Activated T-helper 1 cell treated with anti-CD3 and anti-CD28 coated beads, Interleukin-12 subunit alpha, Interleukin-12 subunit beta, Interleukin-2, Interleukin-4 antibody, amounts not matched to agents 30 ng/mL and 10 ng/mL and 1 ng/mL, durations not matched to agents 14 hours and 24 hours and 36 hours (primary cell): ENCODE measurements at regions of chr16 and their contacts with region 1.

Region 1: DNA sequence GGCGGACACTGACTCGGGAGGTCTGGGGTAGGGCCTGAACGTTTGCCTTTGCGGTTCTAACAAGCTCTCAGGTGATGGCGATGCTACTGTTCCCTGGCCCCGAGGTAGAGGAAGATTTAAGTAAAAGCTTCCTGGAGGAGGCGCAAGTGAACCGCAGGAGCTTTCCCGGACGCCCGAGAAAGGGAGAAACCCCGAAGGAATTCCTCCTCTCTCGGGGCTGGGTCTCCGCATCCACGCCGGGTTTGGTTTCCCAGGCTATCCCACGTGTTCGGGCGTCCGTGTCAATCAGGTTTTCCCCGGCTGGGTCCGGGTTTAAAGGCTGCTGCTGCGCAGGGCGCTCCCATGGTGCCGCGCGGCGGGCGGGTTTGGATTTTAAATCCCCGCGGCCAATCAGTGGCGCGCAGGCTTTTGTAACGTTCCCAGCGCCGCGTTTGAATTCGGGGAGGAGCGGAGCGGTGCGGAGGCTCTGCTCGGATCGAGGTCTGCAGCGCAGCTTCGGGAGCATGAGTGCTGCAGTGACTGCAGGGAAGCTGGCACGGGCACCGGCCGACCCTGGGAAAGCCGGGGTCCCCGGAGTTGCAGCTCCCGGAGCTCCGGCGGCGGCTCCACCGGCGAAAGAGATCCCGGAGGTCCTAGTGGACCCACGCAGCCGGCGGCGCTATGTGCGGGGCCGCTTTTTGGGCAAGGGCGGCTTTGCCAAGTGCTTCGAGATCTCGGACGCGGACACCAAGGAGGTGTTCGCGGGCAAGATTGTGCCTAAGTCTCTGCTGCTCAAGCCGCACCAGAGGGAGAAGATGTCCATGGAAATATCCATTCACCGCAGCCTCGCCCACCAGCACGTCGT is at the start of gene PLK1:
- DNase-seq: peak; percentile 81
- H3K4me3 Mint-ChIP-seq: peak within 1 kb of the TSS; percentile 94
- H3K27ac Mint-ChIP-seq: peak within 1 kb of the TSS; percentile 84
- H3K4me1 Mint-ChIP-seq: peaks cover 34% of the 10 kb centered on the region
- H3K27me3 Mint-ChIP-seq: no peaks in the 10 kb centered on the region
- total RNA-seq, gene PLK1: 45.2 and 54.7 TPM in 2 replicates

Region 2: GRCh38 chr16:23527961-23528643 is 150.6 kb before region 1 on chr16:
- intact Hi-C with region 1: no loop called
- DNase-seq: no peak
- H3K4me3 Mint-ChIP-seq: no peak overlapping the region
- H3K27ac Mint-ChIP-seq: no peak overlapping the region
- H3K4me1 Mint-ChIP-seq: no peaks in the 10 kb centered on the region
- H3K27me3 Mint-ChIP-seq: no peaks in the 10 kb centered on the region

Region 3: GRCh38 chr16:23595951-23596720 is 82.5 kb before region 1 on chr16 and contains the start of gene NDUFAB1:
- intact Hi-C with region 1: loop called (anchors 1 kb)
- DNase-seq: peak; percentile 90
- H3K4me3 Mint-ChIP-seq: peak within 1 kb of the TSS; percentile 88
- H3K27ac Mint-ChIP-seq: peak within 1 kb of the TSS; percentile 80
- H3K4me1 Mint-ChIP-seq: peaks cover 30% of the 10 kb centered on the region
- H3K27me3 Mint-ChIP-seq: no peaks in the 10 kb centered on the region
- total RNA-seq, gene NDUFAB1: 146 and 148 TPM in 2 replicates

Region 4: DNA sequence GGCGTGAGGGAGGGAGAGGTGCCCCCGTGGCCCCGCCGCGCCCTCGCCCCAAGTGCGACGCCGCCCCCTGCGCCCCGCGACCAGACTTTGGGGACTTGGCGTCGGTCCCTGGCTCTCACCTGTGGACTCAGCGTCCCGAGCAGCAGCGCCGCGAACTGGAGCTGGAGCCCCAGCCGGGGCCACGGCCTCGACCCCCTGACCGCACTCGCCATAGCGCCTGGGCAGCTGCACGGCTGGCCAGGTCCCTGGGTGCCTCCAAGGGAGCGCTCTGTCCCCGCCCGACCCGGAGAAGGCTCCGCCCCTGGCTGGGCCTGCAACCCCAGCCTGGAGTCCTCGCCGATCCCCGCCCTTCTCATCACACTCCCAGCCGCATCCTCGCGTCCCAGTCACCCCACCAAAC is 34.3 kb after region 1 on chr16 and contains the start of gene ERN2:
- intact Hi-C with region 1: no loop called
- DNase-seq: no peak
- H3K4me3 Mint-ChIP-seq: no peak within 1 kb of the TSS
- H3K27ac Mint-ChIP-seq: no peak within 1 kb of the TSS
- H3K4me1 Mint-ChIP-seq: no peaks in the 10 kb centered on the region
- H3K27me3 Mint-ChIP-seq: peaks cover 37% of the 10 kb centered on the region
- total RNA-seq, gene ERN2: not detected in 2 replicates

Region 5: DNA sequence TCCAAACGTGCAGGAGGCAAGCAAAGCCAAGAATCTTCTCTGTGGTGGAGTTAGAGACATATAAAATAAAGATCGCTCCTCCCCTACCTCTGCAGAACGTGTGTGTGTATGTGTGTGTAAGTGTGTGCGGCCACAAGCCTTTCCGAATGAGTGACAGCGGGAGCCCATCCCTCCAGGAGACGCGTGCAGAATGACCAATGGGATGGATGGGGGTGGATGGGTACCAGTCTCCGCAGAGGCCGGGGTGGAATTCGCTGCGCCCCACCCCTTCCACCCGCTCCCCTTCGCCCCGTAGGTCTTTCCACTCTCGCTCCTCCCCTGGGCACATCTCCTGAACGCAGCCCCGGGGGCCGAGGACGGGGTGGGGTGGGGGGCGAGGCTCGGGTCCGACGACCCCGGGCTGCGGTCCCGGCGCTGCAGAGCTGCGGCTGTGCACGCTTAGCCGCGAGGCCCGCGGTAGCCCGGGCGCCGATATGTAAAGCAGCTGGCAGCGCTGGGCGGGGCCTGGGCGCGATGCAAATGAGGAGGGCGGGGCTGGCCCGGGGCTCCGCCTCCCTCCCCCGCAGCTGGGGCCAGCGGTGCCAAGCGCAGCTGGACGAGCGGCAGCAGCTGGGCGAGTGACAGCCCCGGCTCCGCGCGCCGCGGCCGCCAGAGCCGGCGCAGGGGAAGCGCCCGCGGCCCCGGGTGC is 156.9 kb after region 1 on chr16 and contains the start of gene PRKCB:
- intact Hi-C with region 1: loop called (anchors 2 kb)
- DNase-seq: peak; percentile 90
- H3K4me3 Mint-ChIP-seq: peak within 1 kb of the TSS; percentile 96
- H3K27ac Mint-ChIP-seq: peak within 1 kb of the TSS; percentile 90
- H3K4me1 Mint-ChIP-seq: peaks cover 69% of the 10 kb centered on the region
- H3K27me3 Mint-ChIP-seq: peaks cover 12% of the 10 kb centered on the region
- total RNA-seq, gene PRKCB: 100 and 109 TPM in 2 replicates

Region 6: DNA sequence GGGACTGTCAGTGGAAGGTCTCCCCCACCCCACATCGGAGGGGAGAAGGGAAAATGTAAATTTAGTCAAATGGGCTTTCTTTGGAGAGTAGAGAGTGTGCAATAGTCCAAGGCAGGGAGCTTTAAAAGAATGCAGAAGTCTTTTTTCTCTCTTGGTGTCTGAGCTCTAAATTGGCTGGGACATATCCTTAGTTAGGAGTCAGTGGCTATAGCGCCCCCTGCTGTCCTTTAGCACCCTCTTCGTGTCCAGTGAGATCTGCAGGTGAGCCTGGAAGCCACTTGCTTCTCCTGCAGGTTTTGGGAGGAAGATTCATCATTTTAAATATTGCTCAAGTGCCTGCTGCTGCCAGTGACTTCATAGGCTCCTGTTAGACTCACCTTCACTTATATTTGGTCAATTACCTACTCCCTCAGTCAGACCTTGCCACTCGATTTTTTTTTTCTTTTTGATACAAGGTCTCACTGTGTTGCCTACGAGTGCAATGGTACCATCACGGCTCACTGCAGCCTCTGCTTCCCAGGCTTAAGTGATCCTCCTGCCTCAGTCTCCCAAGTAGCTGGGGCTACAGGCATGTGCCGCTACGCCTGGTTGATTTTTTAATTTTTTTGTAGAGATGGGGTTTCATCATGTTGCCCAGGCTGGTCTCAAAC is 331.9 kb after region 1 on chr16:
- intact Hi-C with region 1: loop called (anchors 10 kb)
- DNase-seq: peak; percentile 63
- H3K4me3 Mint-ChIP-seq: no peak overlapping the region
- H3K27ac Mint-ChIP-seq: no peak overlapping the region
- H3K4me1 Mint-ChIP-seq: peaks cover 41% of the 10 kb centered on the region
- H3K27me3 Mint-ChIP-seq: no peaks in the 10 kb centered on the region